Mammary epithelial cell (primary cell): ENCODE measurements at regions of chr2 and their contacts with region 1.

Region 1: DNA sequence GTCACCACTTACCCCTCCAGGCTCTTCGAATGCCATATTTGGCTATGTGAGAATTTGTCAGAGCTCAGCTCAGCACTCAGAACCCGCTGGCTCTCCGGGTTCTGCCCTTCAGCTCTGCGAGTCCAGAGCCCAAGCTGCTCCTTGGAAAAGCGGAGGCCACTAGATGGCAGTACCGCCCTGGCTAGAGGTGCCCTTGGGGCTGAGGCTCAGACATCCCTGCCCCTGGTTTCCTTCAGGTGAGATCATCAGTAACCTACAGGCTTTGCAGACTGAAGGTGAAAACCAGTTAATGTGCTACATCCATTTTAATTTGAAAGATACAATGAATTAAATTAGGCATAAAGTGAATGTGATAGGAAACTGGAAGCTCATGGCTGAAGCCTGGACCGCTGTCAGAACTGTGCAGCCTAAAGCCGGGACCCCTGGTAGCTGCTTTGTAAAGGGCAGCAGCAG is 285.6 kb downstream of the AGAP1 start:
- DNase-seq: peak; percentile 67
- H3K4me3 ChIP-seq: no peak overlapping the region
- H3K27ac ChIP-seq: no peak overlapping the region
- H3K4me1 ChIP-seq: no peaks in the 10 kb centered on the region
- H3K27me3 ChIP-seq: no peaks in the 10 kb centered on the region
- CTCF ChIP-seq: peak; percentile 90 to 96

Region 2: DNA sequence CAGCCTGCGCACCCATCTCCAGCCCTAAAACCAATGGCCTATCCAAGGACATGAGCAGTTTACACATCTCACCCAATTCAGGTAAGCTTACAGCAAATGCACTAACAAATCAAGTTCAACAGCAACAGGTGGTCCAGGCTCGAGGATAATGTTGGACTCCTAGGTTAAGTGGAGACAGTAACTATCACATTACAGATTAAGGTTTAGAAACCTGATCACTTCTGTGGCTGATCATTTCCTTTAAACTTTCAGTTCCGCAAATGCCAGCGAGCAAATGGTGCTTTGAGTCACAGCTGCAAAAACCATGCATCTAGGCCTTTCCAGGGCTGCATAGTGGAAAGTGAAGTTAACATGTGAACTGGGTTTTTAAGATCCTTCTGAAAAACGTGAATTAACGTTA is 129.4 kb after region 1 on chr2:
- CTCF ChIA-PET with region 1: no interaction called
- dilution Hi-C with region 1: no loop called
- in situ Hi-C with region 1: no loop called
- intact Hi-C with region 1: no loop called
- DNase-seq: no peak
- H3K4me3 ChIP-seq: no peak overlapping the region
- H3K27ac ChIP-seq: no peak overlapping the region
- H3K4me1 ChIP-seq: no peaks in the 10 kb centered on the region
- H3K27me3 ChIP-seq: no peaks in the 10 kb centered on the region
- CTCF ChIP-seq: no peak

Region 3: GRCh38 chr2:237072067-237072931 is 1292.8 kb after region 1 on chr2:
- CTCF ChIA-PET with region 1: no interaction called
- dilution Hi-C with region 1: loop called (anchors 25 kb)
- in situ Hi-C with region 1: loop called (anchors 25 kb)
- intact Hi-C with region 1: loop called (anchors 5 kb)
- DNase-seq: peak; percentile 31
- H3K4me3 ChIP-seq: no peak overlapping the region
- H3K27ac ChIP-seq: no peak overlapping the region
- H3K4me1 ChIP-seq: no peaks in the 10 kb centered on the region
- H3K27me3 ChIP-seq: no peaks in the 10 kb centered on the region
- CTCF ChIP-seq: peak; percentile 94 to 99